ENCODE measurements at regions of chr1 and their contacts with region 1.

Region 1: DNA sequence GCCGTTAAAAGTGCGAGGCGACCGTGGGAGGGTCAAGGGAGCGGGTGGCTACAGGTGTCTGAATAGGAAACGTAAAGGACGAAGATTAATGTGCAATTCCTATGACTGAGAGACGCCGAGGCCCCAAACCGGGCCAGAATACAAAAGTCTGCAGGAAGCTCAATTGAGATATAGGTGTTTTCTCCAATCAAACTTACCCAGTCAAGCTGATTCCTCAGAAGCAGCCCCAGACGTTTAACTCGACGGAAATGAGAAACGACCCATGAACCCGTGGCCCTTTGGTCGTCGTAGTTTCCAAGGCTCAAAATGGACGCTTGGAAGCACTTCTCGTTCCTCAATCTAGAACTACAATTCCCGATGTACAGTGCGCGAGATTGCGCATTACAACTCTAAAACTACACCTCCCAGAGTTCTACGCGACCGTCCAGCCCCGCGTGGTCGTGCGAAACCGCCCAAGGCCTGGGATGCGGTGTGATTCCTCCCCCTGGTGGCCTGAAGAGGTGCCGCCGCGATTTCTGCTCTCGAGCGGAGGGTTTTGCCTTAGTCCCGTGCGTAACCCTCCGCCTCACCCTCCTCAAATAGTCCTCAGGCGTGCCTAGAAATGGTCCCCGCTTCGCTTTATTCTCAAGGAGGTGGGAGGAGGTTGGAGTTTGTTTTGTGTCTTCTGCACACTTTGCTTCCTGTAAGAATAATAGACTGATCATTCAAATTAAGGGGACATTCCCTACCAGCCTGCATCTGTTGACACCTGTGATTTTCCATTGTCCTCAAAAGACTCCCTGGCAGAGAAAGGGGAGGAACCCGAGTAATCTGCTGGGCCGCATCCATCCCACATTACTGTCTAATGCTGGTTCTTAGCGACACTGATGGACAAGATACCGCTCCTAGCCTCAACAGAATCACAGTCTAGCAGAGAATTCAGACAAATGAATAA is at the start of gene PAFAH2:
- DNase-seq: peak; percentile 93

Region 2: DNA sequence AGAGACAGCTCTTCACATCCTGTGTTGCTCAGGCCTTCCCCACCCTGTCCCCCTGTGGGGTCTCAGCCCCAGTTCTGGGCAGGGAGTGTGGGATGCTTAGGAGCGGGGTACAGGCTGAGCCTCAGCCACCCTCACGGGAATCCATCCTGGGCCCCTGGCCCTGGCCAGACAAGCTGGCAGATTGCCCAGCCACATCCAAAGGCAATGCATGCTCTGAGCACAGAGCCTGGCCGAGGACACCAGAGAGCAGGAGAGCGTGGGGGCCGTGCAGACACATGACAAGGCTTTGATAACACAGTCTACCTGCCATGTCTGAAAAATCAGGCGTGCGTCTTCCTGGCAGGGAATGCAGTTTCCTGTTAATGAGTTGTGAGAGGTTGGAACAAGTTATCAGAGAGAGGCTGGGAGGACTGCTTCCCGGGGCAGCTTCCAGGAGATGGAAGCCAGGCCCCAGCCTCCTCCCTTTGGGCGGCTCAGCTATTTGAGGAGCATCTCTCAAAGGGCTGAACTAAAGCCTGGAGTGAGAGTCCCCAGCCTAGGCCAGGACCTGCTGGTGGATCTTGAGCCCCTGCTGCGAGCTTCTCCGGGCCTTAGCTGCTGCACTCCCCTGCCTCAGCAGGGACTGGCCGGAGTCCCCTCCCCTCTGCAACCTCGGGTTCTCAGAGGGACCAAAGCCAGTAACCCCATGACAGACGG is 270.3 kb before region 1 on chr1:
- CTCF ChIA-PET with region 1: no interaction called
- POLR2A ChIA-PET with region 1: no interaction called
- DNase-seq: no peak

Region 3: DNA sequence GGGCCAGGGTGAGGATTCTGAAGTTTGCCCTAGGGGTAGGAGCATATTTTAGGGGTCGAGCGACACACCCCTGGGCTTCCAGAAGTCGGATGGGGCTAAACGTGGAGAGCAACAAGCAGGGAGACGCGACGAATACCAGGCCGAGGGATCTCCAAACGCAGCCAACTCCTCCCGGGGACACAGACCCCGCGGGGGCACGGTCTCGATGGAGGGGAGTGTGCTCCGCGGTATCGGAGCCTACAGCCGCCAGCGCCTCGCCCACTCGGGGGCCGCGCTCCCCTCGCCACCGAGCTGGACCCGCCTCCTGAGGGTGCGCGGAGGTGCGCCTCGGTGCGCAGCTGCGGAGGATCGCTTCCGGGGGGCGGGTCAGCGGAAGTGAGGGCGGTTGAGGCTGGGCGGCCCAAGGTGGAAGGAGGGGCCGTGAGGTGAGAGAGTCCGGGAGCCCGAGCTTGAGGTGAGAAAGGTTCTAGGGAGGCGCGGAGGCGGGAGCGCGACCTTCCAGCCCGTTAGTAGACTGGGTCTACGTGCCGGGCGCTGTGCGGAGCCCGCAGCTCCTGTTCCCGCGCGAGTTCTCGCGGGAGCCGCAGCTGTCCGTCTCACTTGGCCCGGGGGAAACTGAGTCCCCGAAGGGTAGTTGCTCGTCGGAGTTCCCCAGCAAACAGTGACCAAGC is 178.4 kb before region 1 on chr1 and contains the start of gene MTFR1L:
- CTCF ChIA-PET with region 1: interaction called, 3 read pairs
- POLR2A ChIA-PET with region 1: interaction called, 11 read pairs
- DNase-seq: peak; percentile 87

Region 4: DNA sequence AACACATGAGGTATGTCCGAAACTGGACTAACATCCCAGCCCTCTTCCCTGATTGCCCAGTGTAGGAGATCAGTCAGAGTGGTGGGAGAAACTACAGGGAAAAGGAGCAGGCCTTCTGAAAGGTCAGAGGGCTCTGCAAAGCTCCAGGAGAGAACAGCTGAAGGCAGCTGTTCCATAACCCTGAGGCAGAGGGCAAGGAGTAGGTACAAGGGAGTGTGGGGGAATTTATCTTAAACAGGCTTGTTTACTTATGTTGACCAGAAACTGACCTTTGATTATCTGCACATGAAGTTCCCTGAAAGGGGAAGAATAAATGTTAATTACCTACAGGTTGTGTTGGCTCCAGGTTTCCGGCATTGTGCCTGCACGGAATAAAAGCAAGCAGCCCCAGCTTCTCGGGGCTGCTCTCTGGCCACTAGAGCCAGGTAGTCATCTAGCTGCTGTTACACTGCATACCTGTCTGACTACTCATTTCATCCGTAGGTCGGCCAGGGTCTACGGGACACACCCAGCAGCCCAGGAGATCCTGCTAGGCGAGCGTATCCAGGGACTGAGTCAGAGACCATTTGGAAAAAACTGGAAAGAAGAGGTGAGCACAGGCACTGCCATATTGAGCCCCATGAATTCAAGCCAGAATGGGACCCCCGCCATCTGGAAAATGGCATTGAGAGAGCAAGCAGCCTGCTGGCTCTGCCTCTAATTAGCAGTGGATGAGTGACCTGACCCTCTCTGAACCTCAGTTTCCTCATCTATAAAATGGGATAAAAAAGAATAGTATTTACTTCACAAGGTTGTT is 107.7 kb before region 1 on chr1:
- CTCF ChIA-PET with region 1: interaction called, 25 read pairs
- POLR2A ChIA-PET with region 1: interaction called, 61 read pairs
- DNase-seq: no peak

Region 5: DNA sequence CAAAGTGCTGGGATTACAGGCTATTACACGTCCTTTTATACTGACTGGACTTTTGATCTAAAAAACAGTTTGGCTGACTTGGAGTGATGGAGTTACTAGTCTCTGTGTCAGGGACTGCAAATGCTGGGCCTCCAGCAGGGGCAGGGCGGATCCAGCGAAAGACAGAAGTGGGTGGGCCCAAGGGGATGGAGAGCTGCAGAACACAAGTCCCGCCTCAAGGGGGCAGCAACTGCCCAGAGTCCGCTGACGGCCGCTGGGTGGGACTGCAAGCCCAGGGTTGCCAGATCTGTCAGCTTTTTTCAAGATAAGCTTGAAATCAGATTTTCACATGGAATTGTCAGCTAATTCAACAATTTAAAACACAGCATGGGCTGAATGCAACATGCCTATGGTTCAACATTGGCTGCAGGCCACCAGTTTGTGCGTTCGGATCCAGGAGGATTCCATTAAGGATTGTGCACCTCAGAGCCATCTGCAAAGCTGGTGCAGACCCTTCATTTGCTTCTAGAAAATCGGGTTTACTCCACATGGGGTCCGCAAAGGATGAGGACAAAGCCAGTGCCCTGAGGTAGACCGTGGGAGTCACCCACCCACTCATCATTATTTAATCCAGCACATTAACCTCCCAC is 102.6 kb before region 1 on chr1:
- CTCF ChIA-PET with region 1: interaction called, 25 read pairs
- POLR2A ChIA-PET with region 1: interaction called, 61 read pairs
- DNase-seq: peak; percentile 94

Region 6: DNA sequence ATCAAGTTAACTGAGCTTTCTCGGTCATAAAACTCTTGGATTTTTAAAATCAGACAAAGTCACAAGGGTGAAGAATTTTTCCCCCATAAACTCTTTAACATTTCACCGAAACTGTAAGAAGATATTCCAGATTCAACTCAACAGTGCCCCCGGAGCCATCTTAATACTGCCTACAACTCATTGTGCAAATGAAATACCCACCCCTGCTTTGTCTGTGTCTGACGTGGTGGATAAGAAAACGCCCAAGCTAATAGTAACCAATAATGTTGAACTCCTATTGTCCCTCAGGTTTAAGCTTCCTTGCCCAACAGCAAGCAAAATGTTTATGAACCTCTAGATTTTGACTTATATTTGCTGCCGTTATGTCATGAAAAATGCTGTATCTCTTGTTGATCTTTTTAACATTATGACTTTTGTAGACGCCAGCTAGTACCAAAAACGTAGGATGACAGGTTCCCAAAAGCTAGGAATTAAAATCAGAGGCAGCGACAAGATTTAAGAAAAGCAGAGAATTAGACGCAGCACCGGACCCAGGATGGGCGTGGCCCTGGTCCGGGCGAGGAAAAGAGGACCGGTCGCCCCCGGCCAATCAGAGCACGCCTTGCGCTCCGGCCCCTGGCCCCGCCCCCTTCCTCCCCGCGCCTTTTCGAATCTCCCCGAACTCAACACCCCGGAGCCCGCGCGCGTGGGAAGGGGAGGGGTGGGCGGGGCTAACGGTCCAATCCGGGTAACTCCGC is 93.0 kb before region 1 on chr1:
- CTCF ChIA-PET with region 1: interaction called, 4 read pairs
- POLR2A ChIA-PET with region 1: interaction called, 61 read pairs
- DNase-seq: peak; percentile 96

Region 7: DNA sequence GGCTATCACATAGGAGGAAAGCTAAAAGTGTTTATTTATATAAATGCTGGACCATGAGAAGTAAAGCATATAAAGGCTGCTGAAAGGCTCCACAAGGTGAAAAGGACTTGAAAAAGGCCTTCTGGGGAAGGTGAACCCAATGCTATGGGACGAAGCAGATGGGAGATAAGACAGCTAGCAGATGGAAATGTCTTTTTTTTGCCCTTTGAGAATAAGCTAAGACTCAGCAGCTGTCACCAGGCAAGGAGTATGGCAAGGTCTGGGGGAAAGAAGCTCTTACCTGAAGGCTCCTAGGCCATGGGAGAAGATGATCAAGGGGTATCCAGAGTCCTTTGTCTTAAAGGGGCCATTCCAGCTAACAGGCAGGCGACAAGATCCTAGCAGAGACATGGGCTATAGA is 10.1 kb before region 1 on chr1:
- CTCF ChIA-PET with region 1: interaction called, 3 read pairs
- POLR2A ChIA-PET with region 1: interaction called, 13 read pairs
- DNase-seq: no peak

Measured in HEK293T (cell line).